ENCODE measurements at regions of chr11 and their contacts with region 1.

Region 1: GRCh38 chr11:85826116-85826855 is 15.3 kb upstream of the SYTL2 start:
- DNase-seq: peak in 1 of 5 donors; percentile 30
- H3K4me3 ChIP-seq: no peak overlapping the region
- H3K4me3 Mint-ChIP-seq: peak overlapping the region in 6 of 7 donors; percentile 29 to 80 (median 39)
- H3K27ac ChIP-seq: no peak overlapping the region
- H3K27ac Mint-ChIP-seq: peak overlapping the region; percentile 89 to 98 (median 96)
- H3K4me1 ChIP-seq: peaks cover 62% of the 10 kb centered on the region
- H3K4me1 Mint-ChIP-seq: peaks cover 60 to 74% (median 74%) of the 10 kb centered on the region in 3 donors
- H3K27me3 ChIP-seq: no peaks in the 10 kb centered on the region
- H3K27me3 Mint-ChIP-seq: no peaks in the 10 kb centered on the region

Region 2: GRCh38 chr11:85694386-85694980 is 131.8 kb before region 1 on chr11:
- CTCF ChIA-PET with region 1: interaction called, 13 read pairs
- POLR2A ChIA-PET with region 1: no interaction called
- DNase-seq: peak in 2 of 5 donors; percentile 28 to 44
- H3K4me3 ChIP-seq: no peak overlapping the region
- H3K4me3 Mint-ChIP-seq: no peak overlapping the region
- H3K27ac ChIP-seq: no peak overlapping the region
- H3K27ac Mint-ChIP-seq: peak overlapping the region in 1 of 8 donors; percentile 54
- H3K4me1 ChIP-seq: peaks cover 7% of the 10 kb centered on the region
- H3K4me1 Mint-ChIP-seq: peaks cover 7 to 35% (median 23%) of the 10 kb centered on the region in 3 donors
- H3K27me3 ChIP-seq: no peaks in the 10 kb centered on the region
- H3K27me3 Mint-ChIP-seq: no peaks in the 10 kb centered on the region

Region 3: DNA sequence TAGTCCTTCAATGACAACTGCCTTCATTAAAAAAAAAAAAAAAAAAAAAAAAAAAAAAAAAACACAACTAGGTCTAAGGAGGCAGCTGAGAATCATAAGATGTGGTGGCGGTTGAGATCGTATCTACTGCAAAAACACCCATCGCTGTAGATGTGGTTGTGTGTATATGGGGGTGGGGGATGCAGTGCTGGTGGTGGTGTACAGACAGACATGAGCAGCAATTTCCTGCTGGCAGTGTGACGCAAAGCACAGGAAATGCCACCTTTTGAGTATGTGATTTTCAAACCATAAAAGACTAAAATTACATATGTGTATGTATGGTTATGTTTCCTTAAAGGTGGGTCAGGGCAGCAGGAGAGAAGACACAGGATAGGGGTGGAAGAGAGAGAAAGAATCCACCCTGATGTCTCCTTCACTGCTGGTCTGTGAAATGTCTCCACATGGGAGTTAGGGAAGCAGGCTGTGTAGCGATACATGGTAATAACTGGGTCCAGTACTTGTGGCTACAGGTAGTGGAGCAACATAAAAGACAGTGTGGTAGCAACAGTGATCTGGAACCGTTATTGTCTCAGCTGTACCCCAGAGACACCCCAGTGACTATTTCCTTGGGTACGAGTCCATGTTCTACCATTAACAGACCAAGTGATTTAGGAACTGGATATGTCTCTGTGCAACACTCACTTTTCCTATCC is 73.2 kb before region 1 on chr11:
- CTCF ChIA-PET with region 1: interaction called, 4 read pairs
- POLR2A ChIA-PET with region 1: interaction called, 21 read pairs
- DNase-seq: peak; percentile 77 to 98 (median 96)
- H3K4me3 ChIP-seq: peak overlapping the region; percentile 45
- H3K4me3 Mint-ChIP-seq: peak overlapping the region; percentile 75 to 90 (median 86)
- H3K27ac ChIP-seq: peak overlapping the region; percentile 69
- H3K27ac Mint-ChIP-seq: peak overlapping the region; percentile 92 to 100 (median 98)
- H3K4me1 ChIP-seq: peaks cover 95% of the 10 kb centered on the region
- H3K4me1 Mint-ChIP-seq: peaks cover 97 to 100% (median 99%) of the 10 kb centered on the region in 3 donors
- H3K27me3 ChIP-seq: no peaks in the 10 kb centered on the region
- H3K27me3 Mint-ChIP-seq: peaks cover 0 to 5% of the 10 kb centered on the region in 2 donors

Region 4: DNA sequence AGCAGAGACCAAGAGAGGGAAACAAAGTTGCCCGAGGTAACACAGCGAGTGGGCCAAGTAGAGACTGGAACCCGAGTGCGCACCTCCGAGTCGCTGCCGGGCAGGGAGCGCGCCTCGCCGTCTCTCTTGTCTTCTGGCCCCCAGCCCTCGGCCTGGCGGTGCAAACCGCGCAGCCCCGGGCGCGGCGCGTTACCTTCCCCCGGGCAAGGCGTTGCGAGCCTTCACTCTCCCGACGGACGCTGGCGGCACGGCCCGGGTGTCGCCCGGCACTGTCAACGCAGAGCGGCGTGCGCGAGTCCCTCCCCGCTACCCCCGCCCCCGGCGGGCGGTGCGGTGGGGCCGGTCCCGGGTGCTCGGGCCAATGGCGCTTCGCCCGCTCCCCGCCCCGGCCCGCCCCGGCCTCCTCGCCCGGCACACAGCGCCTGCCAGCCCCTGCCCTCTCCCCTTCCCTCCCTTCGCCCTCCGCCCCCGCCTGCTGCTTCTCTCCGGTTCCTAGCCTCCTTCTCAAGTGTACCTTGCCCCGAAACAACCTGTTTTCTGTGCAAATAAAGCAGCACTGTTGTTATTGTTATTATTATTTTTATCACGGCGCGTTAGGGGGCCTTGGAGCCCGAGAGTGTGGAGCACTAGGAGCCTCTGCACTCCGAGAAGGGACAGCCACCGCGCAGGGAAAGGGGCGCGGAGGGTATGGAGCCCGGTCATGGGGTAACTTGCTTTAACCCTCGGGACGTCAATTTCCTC is 15.2 kb before region 1 on chr11 and contains the start of gene SYTL2:
- CTCF ChIA-PET with region 1: interaction called, 11 read pairs
- POLR2A ChIA-PET with region 1: interaction called, 7 read pairs
- DNase-seq: peak; percentile 73 to 83 (median 78)
- H3K4me3 ChIP-seq: peak within 1 kb of the TSS; percentile 77
- H3K4me3 Mint-ChIP-seq: peak within 1 kb of the TSS; percentile 93 to 97 (median 94)
- H3K27ac ChIP-seq: peak within 1 kb of the TSS; percentile 51
- H3K27ac Mint-ChIP-seq: peak within 1 kb of the TSS; percentile 86 to 98 (median 96)
- H3K4me1 ChIP-seq: peaks cover 26% of the 10 kb centered on the region
- H3K4me1 Mint-ChIP-seq: peaks cover 47 to 64% (median 62%) of the 10 kb centered on the region in 3 donors
- H3K27me3 ChIP-seq: no peaks in the 10 kb centered on the region
- H3K27me3 Mint-ChIP-seq: peaks cover 0 to 1% of the 10 kb centered on the region in 2 donors
- total RNA-seq, gene SYTL2: 12.4 to 13.2 TPM

Region 5: GRCh38 chr11:85893395-85893794 is 67.1 kb after region 1 on chr11:
- CTCF ChIA-PET with region 1: no interaction called
- POLR2A ChIA-PET with region 1: no interaction called
- DNase-seq: no peak
- H3K4me3 ChIP-seq: no peak overlapping the region
- H3K4me3 Mint-ChIP-seq: no peak overlapping the region
- H3K27ac ChIP-seq: no peak overlapping the region
- H3K27ac Mint-ChIP-seq: no peak overlapping the region
- H3K4me1 ChIP-seq: no peaks in the 10 kb centered on the region
- H3K4me1 Mint-ChIP-seq: no peaks in the 10 kb centered on the region
- H3K27me3 ChIP-seq: no peaks in the 10 kb centered on the region
- H3K27me3 Mint-ChIP-seq: peaks cover 0 to 3% of the 10 kb centered on the region in 2 donors